ENCODE measurements at regions of chr3 and their contacts with region 1.

Region 1: GRCh38 chr3:27927882-27928281 is 205.8 kb upstream of the EOMES start:
- DNase-seq: no peak
- H3K4me3 Mint-ChIP-seq: peak overlapping the region; percentile 62
- H3K27ac Mint-ChIP-seq: peak overlapping the region; percentile 82
- H3K4me1 Mint-ChIP-seq: peaks cover 63% of the 10 kb centered on the region
- H3K27me3 Mint-ChIP-seq: no peaks in the 10 kb centered on the region

Region 2: DNA sequence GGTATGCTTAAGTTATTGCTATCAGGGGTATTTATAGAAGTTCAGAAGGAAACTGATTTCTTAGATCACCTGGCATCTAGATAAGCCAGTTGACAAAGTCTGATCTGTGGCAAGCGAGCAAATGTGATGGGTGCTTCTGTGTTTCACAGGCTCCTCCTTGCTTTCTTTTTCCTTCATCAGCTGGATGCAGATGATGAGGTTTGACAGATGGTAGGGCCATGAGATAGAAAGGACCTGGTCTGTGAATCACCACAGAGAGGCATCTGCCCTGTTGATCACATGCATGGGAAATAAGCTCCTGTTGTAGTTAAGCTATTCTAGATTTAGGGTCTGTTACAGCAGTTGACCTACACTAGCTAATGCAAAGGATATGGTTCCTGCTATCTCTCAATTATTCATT is 930.7 kb before region 1 on chr3:
- intact Hi-C with region 1: no loop called
- DNase-seq: no peak
- H3K4me3 Mint-ChIP-seq: no peak overlapping the region
- H3K27ac Mint-ChIP-seq: no peak overlapping the region
- H3K4me1 Mint-ChIP-seq: no peaks in the 10 kb centered on the region
- H3K27me3 Mint-ChIP-seq: no peaks in the 10 kb centered on the region

Region 3: GRCh38 chr3:27721717-27722542 is 206.0 kb before region 1 on chr3 and contains the start of gene EOMES:
- intact Hi-C with region 1: loop called (anchors 2 kb)
- DNase-seq: peak; percentile 67
- H3K4me3 Mint-ChIP-seq: peak within 1 kb of the TSS; percentile 87
- H3K27ac Mint-ChIP-seq: peak within 1 kb of the TSS; percentile 81
- H3K4me1 Mint-ChIP-seq: peaks cover 44% of the 10 kb centered on the region
- H3K27me3 Mint-ChIP-seq: peaks cover 79% of the 10 kb centered on the region
- total RNA-seq, gene EOMES: 29.6 and 30.7 TPM in 2 replicates

Region 4: GRCh38 chr3:27737091-27737490 is 190.8 kb before region 1 on chr3:
- intact Hi-C with region 1: no loop called
- DNase-seq: no peak
- H3K4me3 Mint-ChIP-seq: no peak overlapping the region
- H3K27ac Mint-ChIP-seq: no peak overlapping the region
- H3K4me1 Mint-ChIP-seq: no peaks in the 10 kb centered on the region
- H3K27me3 Mint-ChIP-seq: peaks cover 14% of the 10 kb centered on the region

Region 5: DNA sequence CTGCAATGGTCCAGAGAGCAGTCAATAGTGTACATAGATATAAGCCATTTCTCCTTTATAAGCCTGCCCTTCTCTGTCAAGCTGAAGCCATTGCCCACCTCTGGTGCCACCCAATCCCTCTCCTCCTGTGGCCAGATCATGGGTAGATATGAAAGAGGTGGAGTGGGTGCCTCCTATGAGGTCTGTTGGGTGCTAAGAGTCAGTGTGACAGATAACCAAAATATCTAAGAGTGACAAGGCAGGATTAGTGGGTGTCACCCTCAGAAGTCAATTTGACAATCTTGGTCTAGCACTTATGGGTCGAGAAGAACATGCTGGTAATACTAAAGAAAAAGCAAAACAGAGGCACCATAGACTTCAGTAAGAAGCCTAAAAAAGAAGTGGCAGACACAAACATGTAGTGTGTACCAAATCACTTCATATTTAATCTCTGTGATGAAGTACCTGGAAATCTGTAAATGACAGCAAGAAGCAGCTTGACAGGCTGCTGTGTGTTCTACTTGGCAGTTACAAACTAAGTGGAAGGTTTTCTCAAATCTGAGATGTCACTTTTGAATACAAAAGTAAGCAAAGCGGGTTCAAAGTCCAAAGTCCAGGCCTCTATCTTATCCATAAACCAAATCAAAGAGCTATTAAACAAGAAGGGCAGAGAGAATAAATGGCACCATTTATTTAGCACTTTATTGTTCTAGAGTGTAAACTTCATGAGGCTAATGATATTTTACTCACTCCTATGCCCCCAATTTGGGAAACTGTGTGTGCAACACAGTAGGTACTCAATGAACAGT is 86.9 kb before region 1 on chr3:
- intact Hi-C with region 1: loop called (anchors 5 kb)
- DNase-seq: no peak
- H3K4me3 Mint-ChIP-seq: no peak overlapping the region
- H3K27ac Mint-ChIP-seq: no peak overlapping the region
- H3K4me1 Mint-ChIP-seq: peaks cover 5% of the 10 kb centered on the region
- H3K27me3 Mint-ChIP-seq: no peaks in the 10 kb centered on the region

Region 6: DNA sequence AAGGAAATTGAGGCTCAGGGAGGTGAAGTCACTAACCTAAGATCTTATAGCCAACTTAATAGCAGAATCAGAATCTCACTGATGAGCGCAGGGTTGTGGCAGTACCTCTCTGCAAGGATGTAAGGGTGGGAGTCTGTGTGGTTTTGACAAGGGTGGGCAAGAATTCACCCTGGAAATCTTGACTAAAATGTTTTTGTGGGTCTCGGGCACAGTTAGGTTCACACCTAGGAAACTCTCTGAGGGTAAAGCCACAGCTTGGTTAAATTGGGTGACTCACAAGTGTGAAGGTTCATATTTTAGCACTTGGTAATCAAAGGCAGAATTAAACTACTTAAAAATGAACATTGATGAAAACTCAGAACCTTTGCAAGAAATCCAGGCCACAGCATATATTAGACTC is 27.6 kb before region 1 on chr3:
- intact Hi-C with region 1: loop called (anchors 1 kb)
- DNase-seq: peak; percentile 24
- H3K4me3 Mint-ChIP-seq: peak overlapping the region; percentile 2
- H3K27ac Mint-ChIP-seq: peak overlapping the region; percentile 24
- H3K4me1 Mint-ChIP-seq: peaks cover 56% of the 10 kb centered on the region
- H3K27me3 Mint-ChIP-seq: peaks cover 4% of the 10 kb centered on the region

Region 7: GRCh38 chr3:28036599-28037575 is 109.0 kb after region 1 on chr3:
- intact Hi-C with region 1: loop called (anchors 5 kb)
- DNase-seq: no peak
- H3K4me3 Mint-ChIP-seq: no peak overlapping the region
- H3K27ac Mint-ChIP-seq: peak overlapping the region; percentile 19
- H3K4me1 Mint-ChIP-seq: peaks cover 23% of the 10 kb centered on the region
- H3K27me3 Mint-ChIP-seq: no peaks in the 10 kb centered on the region

Region 8: GRCh38 chr3:28328188-28329151 is 400.6 kb after region 1 on chr3:
- intact Hi-C with region 1: loop called (anchors 1 kb)
- DNase-seq: no peak
- H3K4me3 Mint-ChIP-seq: no peak overlapping the region
- H3K27ac Mint-ChIP-seq: peak overlapping the region; percentile 29
- H3K4me1 Mint-ChIP-seq: peaks cover 44% of the 10 kb centered on the region
- H3K27me3 Mint-ChIP-seq: peaks cover 1% of the 10 kb centered on the region

Measured in activated T-helper 1 cell treated with anti-CD3 and anti-CD28 coated beads, Interleukin-12 subunit alpha, Interleukin-12 subunit beta, Interleukin-2, Interleukin-4 antibody, amounts not matched to agents 30 ng/mL and 10 ng/mL and 1 ng/mL, durations not matched to agents 14 hours and 24 hours and 36 hours (primary cell).